Mammary epithelial cell (primary cell): ENCODE measurements at regions of chr18 and their contacts with region 1.

Region 1: GRCh38 chr18:54776282-54776977 is 51.8 kb upstream of the RAB27B start:
- DNase-seq: peak; percentile 99
- H3K4me3 ChIP-seq: no peak overlapping the region
- H3K27ac ChIP-seq: peak overlapping the region; percentile 98
- H3K4me1 ChIP-seq: peaks cover 30% of the 10 kb centered on the region
- H3K27me3 ChIP-seq: no peaks in the 10 kb centered on the region
- CTCF ChIP-seq: no peak

Region 2: DNA sequence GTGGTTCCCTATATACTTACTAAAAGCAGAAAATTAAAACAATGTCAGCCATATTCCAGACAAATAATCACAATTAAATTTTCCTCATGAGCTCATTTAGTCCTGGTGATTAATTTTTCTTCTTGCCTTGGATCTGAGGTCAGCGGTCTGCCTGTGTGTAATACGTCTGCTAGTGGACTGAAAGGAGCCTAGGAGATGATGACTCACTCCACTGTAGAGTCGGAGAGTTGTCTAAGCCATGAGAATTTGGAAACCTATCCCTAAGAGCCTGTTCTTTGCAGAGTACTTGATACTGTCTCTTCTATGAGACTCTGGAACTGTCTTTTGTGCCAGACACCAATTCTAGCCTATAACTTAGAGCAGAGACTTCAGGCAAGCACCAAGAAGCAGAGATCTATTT is 42.4 kb before region 1 on chr18:
- CTCF ChIA-PET with region 1: no interaction called
- dilution Hi-C with region 1: no loop called
- in situ Hi-C with region 1: no loop called
- intact Hi-C with region 1: loop called (anchors 5 kb)
- DNase-seq: peak; percentile 91
- H3K4me3 ChIP-seq: no peak overlapping the region
- H3K27ac ChIP-seq: peak overlapping the region; percentile 5
- H3K4me1 ChIP-seq: peaks cover 6% of the 10 kb centered on the region
- H3K27me3 ChIP-seq: no peaks in the 10 kb centered on the region
- CTCF ChIP-seq: no peak

Region 3: DNA sequence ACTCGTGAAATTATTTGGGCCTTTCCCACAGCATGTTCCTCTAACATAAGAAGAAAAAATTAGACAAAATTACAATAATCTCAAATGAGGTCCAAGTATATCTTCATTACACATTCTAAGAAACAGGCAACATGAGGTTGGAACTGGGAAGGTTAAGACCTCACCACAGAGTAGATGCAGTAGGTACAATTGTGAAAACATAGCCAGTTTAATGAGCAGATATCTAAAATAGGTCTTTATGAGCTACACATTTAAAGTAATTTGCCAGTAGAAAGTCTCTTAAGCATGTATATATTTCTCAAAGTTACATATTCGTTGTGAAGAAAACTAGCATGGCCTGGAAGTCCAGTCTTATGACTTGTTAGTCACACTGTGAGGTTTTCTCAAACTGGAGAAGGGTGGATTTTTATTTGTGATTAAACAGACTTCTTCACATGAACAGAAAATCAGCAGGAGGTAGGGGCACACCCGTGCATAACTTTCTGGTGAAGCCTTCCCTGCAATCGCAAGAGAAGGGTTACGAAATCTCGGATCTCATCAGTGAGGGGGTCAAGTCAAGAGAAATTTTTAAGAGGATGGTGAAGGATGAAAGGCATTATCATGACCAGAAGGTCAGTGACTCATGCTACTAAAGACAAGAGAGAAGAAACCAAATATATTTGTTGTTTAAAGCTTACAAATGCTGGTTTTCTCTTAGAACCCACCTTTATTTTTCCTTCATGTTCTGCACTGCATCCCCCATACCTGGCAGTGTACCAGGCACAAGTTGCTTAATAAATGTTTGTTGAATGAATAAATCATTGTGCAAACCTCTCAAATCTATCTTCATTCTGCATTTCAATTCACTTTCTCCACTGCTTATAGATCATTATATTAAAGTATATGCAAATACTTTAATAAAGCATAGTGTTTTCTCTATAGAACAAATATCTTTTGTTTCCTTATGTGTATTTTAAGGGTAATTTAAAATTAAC is 46.7 kb after region 1 on chr18:
- CTCF ChIA-PET with region 1: no interaction called
- dilution Hi-C with region 1: no loop called
- in situ Hi-C with region 1: no loop called
- intact Hi-C with region 1: loop called (anchors 1 kb)
- DNase-seq: peak; percentile 94
- H3K4me3 ChIP-seq: no peak overlapping the region
- H3K27ac ChIP-seq: peak overlapping the region; percentile 96
- H3K4me1 ChIP-seq: peaks cover 21% of the 10 kb centered on the region
- H3K27me3 ChIP-seq: no peaks in the 10 kb centered on the region
- CTCF ChIP-seq: no peak

Region 4: DNA sequence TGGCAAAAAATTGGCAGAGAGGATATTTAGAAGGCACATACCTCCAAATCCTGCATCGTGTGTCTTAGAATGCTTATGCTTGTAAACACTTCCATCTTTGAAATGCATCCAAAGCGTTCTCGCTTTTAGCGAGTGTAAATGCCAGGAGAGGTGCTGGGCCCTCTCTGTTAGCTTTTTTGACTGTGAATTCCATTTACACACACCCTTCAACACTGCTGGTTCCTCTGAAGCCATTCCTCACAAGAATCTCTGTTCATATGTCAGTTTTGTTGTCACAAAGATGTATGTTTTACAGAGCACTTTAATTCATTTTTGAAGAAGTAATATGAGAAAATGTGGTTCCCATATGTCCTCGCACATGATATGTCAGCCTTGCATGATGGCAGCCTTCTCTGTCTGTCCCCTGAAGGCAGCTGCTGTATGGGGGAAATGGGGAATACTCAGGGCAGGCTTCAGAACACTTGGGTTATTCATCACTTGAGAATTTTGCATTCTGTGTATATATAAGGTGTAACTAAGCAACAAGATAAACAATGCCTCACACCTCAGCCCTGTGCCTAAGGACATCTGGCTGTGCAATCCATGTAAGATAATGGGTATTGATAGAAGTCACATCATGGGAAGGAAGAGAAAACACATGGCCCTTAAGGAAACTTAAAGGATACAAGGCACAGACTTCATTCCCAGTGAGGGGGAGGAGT is 104.1 kb after region 1 on chr18:
- CTCF ChIA-PET with region 1: no interaction called
- dilution Hi-C with region 1: no loop called
- in situ Hi-C with region 1: no loop called
- intact Hi-C with region 1: loop called (anchors 1 kb)
- DNase-seq: peak; percentile 72
- H3K4me3 ChIP-seq: no peak overlapping the region
- H3K27ac ChIP-seq: no peak overlapping the region
- H3K4me1 ChIP-seq: no peaks in the 10 kb centered on the region
- H3K27me3 ChIP-seq: no peaks in the 10 kb centered on the region
- CTCF ChIP-seq: no peak

Region 5: DNA sequence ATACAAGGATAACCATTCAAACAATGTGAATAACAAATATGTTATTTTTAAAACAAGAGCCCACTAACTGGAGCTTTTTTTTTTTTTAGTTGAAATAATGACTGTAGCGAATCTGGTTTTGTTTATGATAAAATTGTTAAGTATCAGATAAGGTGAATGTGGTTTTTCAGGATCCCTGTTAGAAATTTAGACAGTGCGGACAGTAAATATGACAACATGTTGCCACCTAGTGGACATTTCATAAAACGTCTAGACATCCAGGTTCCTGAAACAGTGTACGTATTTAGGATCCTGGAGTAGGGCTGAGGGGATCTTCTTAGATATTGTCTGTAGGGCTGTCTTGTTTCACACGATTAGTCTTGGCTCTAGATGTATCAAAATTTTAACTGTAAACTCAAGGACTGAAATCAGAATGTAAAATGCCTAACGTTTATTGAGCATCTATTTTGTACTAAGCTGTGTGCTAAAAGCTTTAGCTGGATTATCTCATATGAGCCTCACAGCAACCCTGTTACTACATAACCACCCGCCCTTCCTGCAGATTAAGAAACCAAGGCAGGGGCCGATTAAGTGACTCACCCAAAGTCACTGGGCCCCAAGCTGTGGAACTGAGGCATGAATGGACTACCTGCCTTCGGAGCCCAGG is 206.7 kb after region 1 on chr18:
- CTCF ChIA-PET with region 1: no interaction called
- dilution Hi-C with region 1: no loop called
- in situ Hi-C with region 1: no loop called
- intact Hi-C with region 1: loop called (anchors 5 kb)
- DNase-seq: peak; percentile 48
- H3K4me3 ChIP-seq: no peak overlapping the region
- H3K27ac ChIP-seq: no peak overlapping the region
- H3K4me1 ChIP-seq: no peaks in the 10 kb centered on the region
- H3K27me3 ChIP-seq: no peaks in the 10 kb centered on the region
- CTCF ChIP-seq: peak; percentile 52 to 62